ENCODE measurements at regions of chr3 and their contacts with region 1.

Region 1: DNA sequence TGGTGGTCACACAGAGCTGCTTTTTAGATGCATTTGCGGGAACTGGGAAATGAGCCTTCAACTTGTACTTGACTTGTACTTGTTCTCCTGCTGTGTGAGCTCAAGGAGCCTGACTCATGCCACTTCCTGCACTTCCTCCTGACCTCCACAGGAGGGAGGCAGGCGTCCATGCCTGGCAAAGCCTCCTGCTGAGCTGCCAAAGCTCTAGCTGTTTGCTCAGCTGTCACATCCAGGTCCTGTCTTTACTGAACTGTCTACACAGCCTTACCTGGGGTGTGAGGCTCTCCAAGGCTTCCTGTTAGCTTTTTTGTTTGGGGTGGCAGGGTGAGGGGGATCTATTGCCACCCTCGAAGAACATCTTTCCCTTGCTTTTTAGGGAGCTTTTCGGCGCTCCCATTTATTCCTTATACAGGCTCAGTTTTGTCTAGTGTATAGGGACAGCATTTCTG is 6.4 kb downstream of the THPO start:
- DNase-seq: peak; percentile 82
- ATAC-seq: peak; percentile 86
- H3K4me3 Mint-ChIP-seq: no peak overlapping the region
- H3K27ac Mint-ChIP-seq: peak overlapping the region; percentile 73; the same call in 1 of the 2 replicates
- H3K4me1 Mint-ChIP-seq: peaks cover 51% of the 10 kb centered on the region
- H3K27me3 Mint-ChIP-seq: peaks cover 4% of the 10 kb centered on the region
- CTCF ChIP-seq: peak; percentile 72

Region 2: GRCh38 chr3:184354121-184354728 is 17.4 kb before region 1 on chr3:
- CTCF ChIA-PET with region 1: interaction called, 28 read pairs
- POLR2A ChIA-PET with region 1: no interaction called
- DNase-seq: peak; percentile 74
- ATAC-seq: peak; percentile 72
- H3K4me3 Mint-ChIP-seq: no peak overlapping the region
- H3K27ac Mint-ChIP-seq: no peak overlapping the region
- H3K4me1 Mint-ChIP-seq: peaks cover 12% of the 10 kb centered on the region
- H3K27me3 Mint-ChIP-seq: no peaks in the 10 kb centered on the region
- CTCF ChIP-seq: peak; percentile 67

Region 3: GRCh38 chr3:184469423-184469822 is 97.8 kb after region 1 on chr3:
- CTCF ChIA-PET with region 1: interaction called, 83 read pairs
- POLR2A ChIA-PET with region 1: no interaction called
- DNase-seq: peak; percentile 86
- ATAC-seq: peak; percentile 89
- H3K4me3 Mint-ChIP-seq: no peak overlapping the region
- H3K27ac Mint-ChIP-seq: no peak overlapping the region
- H3K4me1 Mint-ChIP-seq: peaks cover 11% of the 10 kb centered on the region; the same call in 1 of the 2 replicates
- H3K27me3 Mint-ChIP-seq: no peaks in the 10 kb centered on the region
- CTCF ChIP-seq: peak; percentile 59

Region 4: GRCh38 chr3:184513276-184514170 is 141.9 kb after region 1 on chr3:
- CTCF ChIA-PET with region 1: interaction called, 93 read pairs
- POLR2A ChIA-PET with region 1: interaction called, 8 read pairs
- DNase-seq: peak; percentile 95
- ATAC-seq: peak; percentile 95
- H3K4me3 Mint-ChIP-seq: peak overlapping the region; percentile 71
- H3K27ac Mint-ChIP-seq: no peak overlapping the region
- H3K4me1 Mint-ChIP-seq: peaks cover 30% of the 10 kb centered on the region
- H3K27me3 Mint-ChIP-seq: peaks cover 54% of the 10 kb centered on the region
- CTCF ChIP-seq: peak; percentile 79

Region 5: GRCh38 chr3:184549793-184550577 is 178.4 kb after region 1 on chr3:
- CTCF ChIA-PET with region 1: interaction called, 183 read pairs
- POLR2A ChIA-PET with region 1: no interaction called
- DNase-seq: no peak
- ATAC-seq: no peak
- H3K4me3 Mint-ChIP-seq: no peak overlapping the region
- H3K27ac Mint-ChIP-seq: no peak overlapping the region
- H3K4me1 Mint-ChIP-seq: peaks cover 4% of the 10 kb centered on the region; the same call in 1 of the 2 replicates
- H3K27me3 Mint-ChIP-seq: peaks cover 9% of the 10 kb centered on the region
- CTCF ChIP-seq: no peak